ENCODE measurements at regions of chr7 and their contacts with region 1.

Region 1: DNA sequence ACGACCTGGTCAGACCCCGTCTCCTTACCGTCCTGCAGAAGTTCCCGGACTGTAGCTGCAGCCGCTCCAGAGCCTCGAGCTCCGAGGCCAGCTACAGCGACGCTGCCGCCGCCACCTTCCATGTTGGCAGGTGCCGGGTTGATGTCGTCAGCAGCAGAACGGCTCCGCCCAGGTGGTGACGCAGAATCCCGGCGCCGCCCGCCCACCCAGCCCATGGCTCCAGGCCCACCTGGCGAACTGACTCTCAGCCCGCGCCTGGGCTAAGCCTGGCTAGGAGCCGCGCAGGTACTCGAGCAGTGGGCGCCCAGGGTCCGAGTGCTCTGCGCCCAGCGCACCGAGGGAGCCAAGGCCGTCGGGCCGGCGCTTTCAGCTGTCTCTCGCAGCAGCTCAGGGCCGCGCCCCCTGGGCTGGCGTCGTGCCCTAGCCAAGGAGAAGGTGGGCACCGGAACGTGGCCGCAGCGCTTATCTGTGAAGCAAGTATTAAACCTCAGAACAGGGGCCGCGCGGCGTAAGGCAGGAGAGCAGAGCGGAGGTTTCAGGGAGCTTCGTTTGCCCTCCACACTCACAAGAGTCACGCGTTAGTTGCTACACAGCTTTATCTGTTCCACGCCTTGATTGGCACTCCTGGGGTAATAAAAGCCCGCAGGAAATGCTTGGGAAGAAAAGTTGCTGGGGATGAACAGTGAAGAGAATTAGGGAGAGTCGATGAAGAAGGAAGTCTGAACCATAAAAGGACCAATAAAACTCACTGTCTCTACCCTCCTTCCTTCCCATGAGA is at the starts of genes COG5 and DUS4L:
- DNase-seq: peak; percentile 79 to 88 (median 82)
- H3K4me3 ChIP-seq: peak within 1 kb of the TSS; percentile 77
- H3K4me3 Mint-ChIP-seq: peak within 1 kb of the TSS; percentile 78 to 96 (median 86)
- H3K27ac ChIP-seq: peak within 1 kb of the TSS; percentile 92
- H3K27ac Mint-ChIP-seq: peak within 1 kb of the TSS; percentile 91 to 98 (median 94)
- H3K4me1 ChIP-seq: peaks cover 49% of the 10 kb centered on the region
- H3K4me1 Mint-ChIP-seq: peaks cover 54 to 66% (median 62%) of the 10 kb centered on the region in 3 donors
- H3K27me3 ChIP-seq: no peaks in the 10 kb centered on the region
- H3K27me3 Mint-ChIP-seq: no peaks in the 10 kb centered on the region
- total RNA-seq, gene COG5: 29.2 to 38.9 TPM
- total RNA-seq, gene DUS4L: 11.6 TPM

Region 2: DNA sequence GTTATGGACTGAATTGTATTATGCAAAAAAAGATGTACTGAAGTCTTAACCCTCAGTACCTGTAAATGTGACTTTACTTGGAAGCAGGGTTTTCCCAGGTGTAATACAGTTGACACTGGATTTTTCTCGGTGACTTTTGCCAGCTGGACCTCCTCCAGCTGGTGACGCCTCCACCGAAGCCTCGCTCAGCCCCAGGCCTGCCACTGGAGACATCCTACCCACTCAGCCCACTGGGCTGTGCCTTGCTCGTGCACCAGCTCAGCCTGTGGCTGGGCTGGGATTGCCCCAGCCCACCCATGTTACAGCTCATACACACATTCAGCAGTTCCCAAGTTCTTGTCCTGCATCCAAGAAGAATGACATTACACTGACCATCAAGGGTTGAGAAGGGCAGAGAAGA is 136.5 kb before region 1 on chr7:
- CTCF ChIA-PET with region 1: no interaction called
- POLR2A ChIA-PET with region 1: no interaction called
- DNase-seq: no peak
- H3K4me3 ChIP-seq: no peak overlapping the region
- H3K4me3 Mint-ChIP-seq: no peak overlapping the region
- H3K27ac ChIP-seq: no peak overlapping the region
- H3K27ac Mint-ChIP-seq: no peak overlapping the region
- H3K4me1 ChIP-seq: no peaks in the 10 kb centered on the region
- H3K4me1 Mint-ChIP-seq: peaks cover 4 to 28% (median 16%) of the 10 kb centered on the region in 3 donors
- H3K27me3 ChIP-seq: no peaks in the 10 kb centered on the region
- H3K27me3 Mint-ChIP-seq: no peaks in the 10 kb centered on the region

Region 3: DNA sequence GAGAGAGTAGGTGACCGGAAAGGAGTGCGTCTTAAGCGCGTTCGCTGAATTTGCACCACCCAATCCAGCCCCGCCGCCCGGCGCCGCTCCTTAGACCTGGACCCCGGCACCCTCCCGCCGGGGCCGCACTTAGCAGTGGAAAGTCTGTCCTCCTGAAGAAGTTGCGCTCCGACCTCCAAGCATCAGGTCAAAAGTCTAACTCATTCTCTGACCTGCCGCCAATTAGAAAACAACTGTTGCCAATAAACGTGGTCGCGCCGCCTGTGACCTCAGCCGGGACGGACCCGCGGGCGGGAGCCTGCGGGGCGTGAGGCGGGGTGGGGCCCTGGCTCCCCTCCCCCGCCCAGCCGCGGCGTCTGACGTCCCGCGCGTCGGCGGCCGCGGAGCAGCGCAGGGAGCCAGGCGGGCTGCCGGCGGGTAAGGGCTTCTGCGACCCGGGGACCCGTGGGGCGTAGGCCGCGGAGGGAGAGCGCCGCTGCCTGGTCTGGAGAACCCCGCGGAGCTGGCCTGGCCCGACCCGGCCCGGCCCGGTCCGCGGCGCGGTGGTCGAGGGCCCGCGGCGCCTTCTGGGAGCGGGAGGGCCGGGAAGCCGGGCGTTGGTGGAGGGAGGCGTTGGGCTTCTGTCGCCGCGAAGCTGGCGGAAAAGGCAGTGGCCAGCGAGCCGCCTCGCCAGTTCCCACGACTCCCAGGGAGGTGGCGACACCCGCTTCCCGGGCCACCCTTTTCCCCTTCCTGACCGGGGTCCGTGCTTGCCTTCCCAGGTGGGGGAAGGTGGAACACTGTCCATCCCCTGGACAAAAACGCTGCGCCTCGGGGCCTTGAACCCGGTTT is 16.1 kb after region 1 on chr7 and contains the start of gene BCAP29:
- CTCF ChIA-PET with region 1: interaction called, 5 read pairs
- POLR2A ChIA-PET with region 1: interaction called, 22 read pairs
- DNase-seq: peak; percentile 60 to 76 (median 73)
- H3K4me3 ChIP-seq: peak within 1 kb of the TSS; percentile 73
- H3K4me3 Mint-ChIP-seq: peak within 1 kb of the TSS; percentile 90 to 97 (median 91)
- H3K27ac ChIP-seq: peak within 1 kb of the TSS; percentile 83
- H3K27ac Mint-ChIP-seq: peak within 1 kb of the TSS; percentile 86 to 96 (median 90)
- H3K4me1 ChIP-seq: peaks cover 9% of the 10 kb centered on the region
- H3K4me1 Mint-ChIP-seq: peaks cover 22 to 35% (median 34%) of the 10 kb centered on the region in 3 donors
- H3K27me3 ChIP-seq: no peaks in the 10 kb centered on the region
- H3K27me3 Mint-ChIP-seq: no peaks in the 10 kb centered on the region
- total RNA-seq, gene BCAP29: 46.5 to 48.7 TPM

Region 4: DNA sequence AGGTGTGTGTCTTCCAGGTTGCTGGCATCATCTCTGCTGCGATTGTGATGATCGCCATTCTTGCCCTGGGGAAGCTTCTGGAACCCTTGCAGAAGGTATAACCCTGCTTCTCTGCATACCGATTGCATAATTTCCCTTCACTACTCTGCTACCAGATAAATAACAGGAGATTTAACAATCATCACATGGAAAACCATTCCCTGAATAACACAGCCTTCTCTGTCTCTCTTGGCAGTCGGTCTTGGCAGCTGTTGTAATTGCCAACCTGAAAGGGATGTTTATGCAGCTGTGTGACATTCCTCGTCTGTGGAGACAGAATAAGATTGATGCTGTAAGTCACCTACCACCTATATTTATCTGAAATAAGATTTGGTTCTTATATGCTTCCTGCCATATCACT is 130.4 kb after region 1 on chr7:
- CTCF ChIA-PET with region 1: no interaction called
- POLR2A ChIA-PET with region 1: no interaction called
- DNase-seq: no peak
- H3K4me3 ChIP-seq: no peak overlapping the region
- H3K4me3 Mint-ChIP-seq: no peak overlapping the region
- H3K27ac ChIP-seq: no peak overlapping the region
- H3K27ac Mint-ChIP-seq: no peak overlapping the region
- H3K4me1 ChIP-seq: no peaks in the 10 kb centered on the region
- H3K4me1 Mint-ChIP-seq: no peaks in the 10 kb centered on the region
- H3K27me3 ChIP-seq: no peaks in the 10 kb centered on the region
- H3K27me3 Mint-ChIP-seq: peaks cover 3 to 33% of the 10 kb centered on the region in 2 donors